Naive thymus-derived CD4-positive, alpha-beta T cell (primary cell): ENCODE measurements at regions of chr2 and their contacts with region 1.

Region 1: GRCh38 chr2:223957092-223957851 is at the start of gene MRPL44:
- DNase-seq: peak; percentile 92 to 99 (median 96)
- ATAC-seq: peak; percentile 100
- H3K4me3 ChIP-seq: peak within 1 kb of the TSS; percentile 90
- H3K4me3 Mint-ChIP-seq: peak within 1 kb of the TSS; percentile 90 to 97 (median 94)
- H3K27ac ChIP-seq: peak within 1 kb of the TSS; percentile 81
- H3K27ac Mint-ChIP-seq: peak within 1 kb of the TSS; percentile 78 to 98 (median 95)
- H3K4me1 ChIP-seq: peaks cover 40 to 48% of the 10 kb centered on the region in 2 donors
- H3K4me1 Mint-ChIP-seq: peaks cover 33 to 70% (median 58%) of the 10 kb centered on the region in 7 donors
- H3K27me3 ChIP-seq: no peaks in the 10 kb centered on the region
- H3K27me3 Mint-ChIP-seq: no peaks in the 10 kb centered on the region
- total RNA-seq, gene MRPL44: 18.0 to 31.2 (median 26.8) TPM

Region 2: DNA sequence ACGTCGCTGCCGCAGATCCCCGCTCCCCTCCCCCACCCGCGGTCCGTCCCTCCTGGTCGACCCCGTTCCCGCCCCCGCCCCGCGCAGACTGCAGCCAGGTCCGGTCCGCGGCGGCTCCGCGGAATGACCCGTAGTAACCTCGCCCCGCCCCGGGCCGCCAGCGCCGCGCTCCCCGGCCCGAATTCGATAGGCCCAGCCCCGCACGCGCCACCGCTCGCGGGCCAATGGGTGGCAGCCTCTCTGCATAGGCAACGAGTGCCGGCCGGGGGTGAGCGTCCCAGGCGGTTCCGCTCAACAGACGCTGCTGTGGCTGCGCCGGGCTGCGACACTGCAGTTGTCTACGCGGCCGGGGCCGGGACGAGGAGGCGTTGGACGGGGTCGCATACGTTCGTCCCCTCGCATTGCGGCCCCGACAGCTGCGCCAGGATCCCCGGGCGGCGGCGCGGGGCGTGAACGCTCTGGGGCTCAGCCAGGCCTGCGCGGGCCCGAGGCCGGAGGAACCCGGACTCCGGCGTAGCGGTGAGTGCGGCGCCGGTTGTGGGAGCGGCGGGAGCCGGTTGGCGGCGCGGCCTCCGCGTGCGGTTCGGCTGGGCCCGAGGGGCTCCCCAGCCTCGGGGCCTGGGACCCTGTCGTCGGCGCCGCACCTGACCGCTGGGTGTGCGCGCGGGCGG is 1096.4 kb before region 1 on chr2 and contains the start of gene ACSL3:
- CTCF ChIA-PET with region 1: no interaction called
- POLR2A ChIA-PET with region 1: no interaction called
- intact Hi-C with region 1: loop called in 1 of 2 experiments (anchors 5 kb)
- DNase-seq: peak; percentile 85 to 96 (median 91)
- ATAC-seq: peak; percentile 99
- H3K4me3 ChIP-seq: peak within 1 kb of the TSS; percentile 82
- H3K4me3 Mint-ChIP-seq: peak within 1 kb of the TSS in 9 of 10 donors; percentile 62 to 88 (median 79)
- H3K27ac ChIP-seq: peak within 1 kb of the TSS; percentile 90
- H3K27ac Mint-ChIP-seq: peak within 1 kb of the TSS in 8 of 9 donors; percentile 87 to 96 (median 92)
- H3K4me1 ChIP-seq: peaks cover 13 to 20% of the 10 kb centered on the region in 2 donors
- H3K4me1 Mint-ChIP-seq: peaks cover 0 to 15% (median 9%) of the 10 kb centered on the region in 7 donors
- H3K27me3 ChIP-seq: no peaks in the 10 kb centered on the region
- H3K27me3 Mint-ChIP-seq: peaks cover 0 to 15% (median 0%) of the 10 kb centered on the region in 5 donors
- total RNA-seq, gene ACSL3: 30.3 to 69.6 (median 40.5) TPM

Region 3: DNA sequence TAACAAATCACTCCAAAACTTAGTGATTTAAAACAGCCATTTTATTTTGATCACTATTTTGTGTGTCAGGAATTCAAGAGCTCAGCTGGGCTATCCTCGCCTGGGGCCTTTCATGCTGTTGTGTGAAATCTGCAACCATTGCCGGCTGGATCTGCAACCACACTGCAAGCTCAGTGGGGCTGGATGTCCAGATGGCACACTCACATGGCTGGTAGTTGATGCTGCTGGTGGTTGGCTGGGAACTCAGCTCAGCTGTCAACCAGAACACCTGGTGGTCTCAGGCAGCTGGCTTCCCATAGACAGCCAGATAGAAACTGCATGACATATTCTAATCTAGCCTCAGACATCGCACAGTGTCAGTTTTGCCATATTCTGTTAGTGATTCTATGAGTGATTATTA is 89.3 kb before region 1 on chr2:
- CTCF ChIA-PET with region 1: no interaction called
- POLR2A ChIA-PET with region 1: interaction called, 4 read pairs
- intact Hi-C with region 1: loop called in 1 of 2 experiments (anchors 2 kb)
- DNase-seq: no peak
- ATAC-seq: no peak
- H3K4me3 ChIP-seq: no peak overlapping the region
- H3K4me3 Mint-ChIP-seq: no peak overlapping the region
- H3K27ac ChIP-seq: no peak overlapping the region
- H3K27ac Mint-ChIP-seq: no peak overlapping the region
- H3K4me1 ChIP-seq: peaks cover 22% of the 10 kb centered on the region in 2 donors
- H3K4me1 Mint-ChIP-seq: peaks cover 19 to 34% (median 24%) of the 10 kb centered on the region in 7 donors
- H3K27me3 ChIP-seq: no peaks in the 10 kb centered on the region
- H3K27me3 Mint-ChIP-seq: no peaks in the 10 kb centered on the region

Region 4: DNA sequence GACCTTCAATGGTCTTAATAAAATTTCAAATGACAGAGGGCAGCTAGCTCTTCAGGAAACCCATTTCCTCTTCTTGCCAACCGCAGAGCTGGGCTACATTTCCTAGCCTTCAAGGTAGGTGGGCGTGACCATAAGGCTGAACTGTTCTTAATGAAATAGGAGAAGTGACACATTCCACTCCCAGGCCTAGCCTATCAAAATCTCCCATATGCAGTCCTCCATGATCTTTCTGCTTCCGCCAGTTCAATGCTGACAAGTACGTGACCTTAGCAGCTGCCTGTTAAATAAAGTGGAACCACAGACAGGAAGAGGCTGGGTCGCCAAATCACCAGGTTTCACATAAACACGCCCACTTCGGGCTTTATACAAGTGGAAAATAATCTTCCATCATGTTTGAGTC is 68.6 kb after region 1 on chr2:
- CTCF ChIA-PET with region 1: no interaction called
- POLR2A ChIA-PET with region 1: interaction called, 4 read pairs
- intact Hi-C with region 1: loop called (anchors 1 kb)
- DNase-seq: peak in 8 of 9 donors; percentile 47 to 78 (median 68)
- ATAC-seq: peak; percentile 93
- H3K4me3 ChIP-seq: no peak overlapping the region
- H3K4me3 Mint-ChIP-seq: peak overlapping the region; percentile 31 to 86 (median 60)
- H3K27ac ChIP-seq: peak overlapping the region; percentile 56
- H3K27ac Mint-ChIP-seq: peak overlapping the region; percentile 85 to 96 (median 92)
- H3K4me1 ChIP-seq: peaks cover 0 to 56% of the 10 kb centered on the region in 2 donors
- H3K4me1 Mint-ChIP-seq: peaks cover 37 to 86% (median 70%) of the 10 kb centered on the region in 7 donors
- H3K27me3 ChIP-seq: no peaks in the 10 kb centered on the region
- H3K27me3 Mint-ChIP-seq: no peaks in the 10 kb centered on the region

Region 5: GRCh38 chr2:224927646-224928173 is 970.4 kb after region 1 on chr2:
- CTCF ChIA-PET with region 1: no interaction called
- POLR2A ChIA-PET with region 1: no interaction called
- intact Hi-C with region 1: loop called in 1 of 2 experiments (anchors 5 kb)
- DNase-seq: peak; percentile 18 to 91 (median 85)
- ATAC-seq: peak; percentile 89
- H3K4me3 ChIP-seq: no peak overlapping the region
- H3K4me3 Mint-ChIP-seq: peak overlapping the region; percentile 48 to 85 (median 74)
- H3K27ac ChIP-seq: peak overlapping the region; percentile 86
- H3K27ac Mint-ChIP-seq: peak overlapping the region; percentile 87 to 99 (median 96)
- H3K4me1 ChIP-seq: peaks cover 81 to 95% of the 10 kb centered on the region in 2 donors
- H3K4me1 Mint-ChIP-seq: peaks cover 85 to 99% (median 98%) of the 10 kb centered on the region in 7 donors
- H3K27me3 ChIP-seq: no peaks in the 10 kb centered on the region
- H3K27me3 Mint-ChIP-seq: no peaks in the 10 kb centered on the region

Region 6: DNA sequence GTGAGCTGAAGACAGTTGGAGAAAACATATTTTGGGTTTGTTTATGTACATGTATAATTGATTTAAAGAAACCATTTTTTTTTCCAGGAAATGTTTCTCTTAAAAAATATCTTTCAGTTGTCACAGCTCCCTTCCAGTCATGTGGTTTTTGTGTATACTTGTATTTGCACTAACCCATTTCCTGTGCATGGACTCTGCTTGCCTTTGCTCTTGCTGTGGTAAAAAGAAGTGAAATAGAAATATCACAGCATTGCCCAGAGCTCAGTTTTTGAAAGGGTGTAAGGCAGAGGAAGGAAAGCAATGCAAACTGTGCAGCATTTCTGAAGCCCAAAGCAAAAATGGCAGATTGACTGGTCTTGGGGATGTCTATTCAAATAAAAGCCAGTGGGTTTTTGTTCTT is 1095.4 kb after region 1 on chr2:
- CTCF ChIA-PET with region 1: no interaction called
- POLR2A ChIA-PET with region 1: no interaction called
- intact Hi-C with region 1: loop called in 1 of 2 experiments (anchors 10 kb)
- DNase-seq: peak in 6 of 9 donors; percentile 53 to 82 (median 73)
- ATAC-seq: peak; percentile 90
- H3K4me3 ChIP-seq: peak overlapping the region; percentile 17
- H3K4me3 Mint-ChIP-seq: peak overlapping the region; percentile 43 to 77 (median 64)
- H3K27ac ChIP-seq: peak overlapping the region; percentile 55
- H3K27ac Mint-ChIP-seq: peak overlapping the region; percentile 60 to 94 (median 80)
- H3K4me1 ChIP-seq: peaks cover 42 to 45% of the 10 kb centered on the region in 2 donors
- H3K4me1 Mint-ChIP-seq: peaks cover 29 to 71% (median 67%) of the 10 kb centered on the region in 7 donors
- H3K27me3 ChIP-seq: no peaks in the 10 kb centered on the region
- H3K27me3 Mint-ChIP-seq: peaks cover 0 to 20% (median 0%) of the 10 kb centered on the region in 5 donors